IMR-90 (cell line): ENCODE measurements at regions of chr9 and their contacts with region 1.

Region 1: GRCh38 chr9:120842690-120843499 is at the start of gene PSMD5:
- DNase-seq: peak; percentile 100
- ATAC-seq: peak; percentile 99
- H3K4me3 ChIP-seq: peak within 1 kb of the TSS; percentile 91
- H3K27ac ChIP-seq: peak within 1 kb of the TSS; percentile 91
- H3K4me1 ChIP-seq: peaks cover 7% of the 10 kb centered on the region
- H3K27me3 ChIP-seq: no peaks in the 10 kb centered on the region
- CTCF ChIP-seq: 0 out of 2 replicates have a peak, but pooled peaks have one; percentile 3
- POLR2A ChIP-seq: peak; percentile 92
- RAD21 ChIP-seq: no peak
- total RNA-seq, gene PSMD5: 25.6 and 38.9 TPM in 2 replicates

Region 2: DNA sequence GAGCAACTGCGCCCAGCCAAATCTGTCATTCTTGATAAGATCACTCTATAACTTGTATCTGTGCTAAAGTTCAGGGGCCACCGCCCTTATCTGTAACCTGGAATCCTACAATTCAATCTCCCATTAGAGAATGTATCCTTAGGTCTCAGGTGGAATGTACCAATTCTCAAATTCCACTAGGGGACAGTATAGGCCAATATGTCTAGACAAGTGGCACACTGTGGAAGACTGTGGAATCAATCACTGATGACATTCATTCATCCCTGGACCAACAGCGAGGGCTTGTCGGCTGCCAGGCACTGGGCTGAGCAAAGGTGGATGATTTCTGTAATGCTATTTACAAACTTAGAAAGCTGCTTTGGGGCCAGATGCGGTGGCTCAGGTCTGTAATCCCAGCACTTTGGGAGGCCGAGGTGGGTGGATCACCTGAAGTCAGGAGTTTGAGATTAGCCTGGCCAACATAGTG is 99.9 kb before region 1 on chr9:
- CTCF ChIA-PET with region 1: no interaction called
- POLR2A ChIA-PET with region 1: no interaction called
- dilution Hi-C with region 1: no loop called
- in situ Hi-C with region 1: no loop called
- intact Hi-C with region 1: no loop called
- DNase-seq: peak; percentile 35
- ATAC-seq: peak; percentile 74
- H3K4me3 ChIP-seq: no peak overlapping the region
- H3K27ac ChIP-seq: no peak overlapping the region
- H3K4me1 ChIP-seq: no peaks in the 10 kb centered on the region
- H3K27me3 ChIP-seq: no peaks in the 10 kb centered on the region
- CTCF ChIP-seq: peak; percentile 60
- POLR2A ChIP-seq: no peak
- RAD21 ChIP-seq: peak; percentile 61

Region 3: DNA sequence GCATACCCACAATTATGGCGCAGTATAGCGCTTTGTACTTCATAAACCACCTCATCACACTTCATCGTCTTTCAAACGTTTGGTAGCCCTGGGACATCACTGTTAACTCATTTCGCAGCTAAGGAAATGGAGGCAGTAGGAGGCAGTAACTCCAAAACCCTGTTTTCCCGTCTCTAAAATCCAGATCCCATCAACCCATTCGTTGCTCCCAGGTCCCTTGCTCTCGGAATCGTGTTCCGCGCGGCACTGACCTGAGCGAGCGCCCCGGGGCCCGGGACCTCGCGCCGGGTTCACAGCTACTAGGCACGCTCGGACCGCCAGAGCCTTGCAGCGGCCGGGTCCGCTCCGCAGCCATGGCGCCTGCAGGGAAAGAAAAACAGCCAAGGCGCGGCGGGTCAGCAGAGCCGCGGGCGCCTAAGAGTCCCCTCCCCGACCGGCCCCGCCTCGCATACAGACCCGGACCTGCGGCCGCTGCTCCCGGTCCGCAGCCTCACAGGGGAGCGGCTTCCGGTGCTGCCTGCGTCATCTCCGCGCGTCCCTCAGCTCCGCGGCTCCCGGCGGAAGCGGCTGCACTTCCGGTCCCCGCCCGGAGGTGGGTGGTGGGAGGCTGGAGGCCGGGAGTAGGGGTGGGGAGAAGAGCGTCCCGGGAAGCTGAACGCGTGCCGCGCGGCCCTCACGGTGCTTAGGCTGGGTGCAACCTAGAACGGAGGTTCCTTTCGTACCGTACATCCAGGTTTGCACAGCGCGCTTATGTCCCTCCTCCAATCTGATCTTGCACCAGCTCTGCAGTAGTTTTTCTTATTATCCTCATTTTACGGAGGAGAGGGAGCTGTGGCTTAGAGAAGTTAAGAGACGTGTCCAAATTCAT is 49.8 kb before region 1 on chr9 and contains the start of gene FBXW2:
- CTCF ChIA-PET with region 1: no interaction called
- POLR2A ChIA-PET with region 1: no interaction called
- dilution Hi-C with region 1: no loop called
- in situ Hi-C with region 1: no loop called
- intact Hi-C with region 1: loop called (anchors 2 kb)
- DNase-seq: peak; percentile 89
- ATAC-seq: peak; percentile 97
- H3K4me3 ChIP-seq: peak within 1 kb of the TSS; percentile 79
- H3K27ac ChIP-seq: peak within 1 kb of the TSS; percentile 86
- H3K4me1 ChIP-seq: peaks cover 6% of the 10 kb centered on the region; the same call in 1 of the 2 replicates
- H3K27me3 ChIP-seq: no peaks in the 10 kb centered on the region
- CTCF ChIP-seq: no peak
- POLR2A ChIP-seq: peak; percentile 86; the same call in 1 of the 2 replicates
- RAD21 ChIP-seq: no peak
- total RNA-seq, gene FBXW2: 27.1 and 35.6 TPM in 2 replicates

Region 4: GRCh38 chr9:120868676-120869359 is 25.9 kb after region 1 on chr9:
- CTCF ChIA-PET with region 1: no interaction called
- POLR2A ChIA-PET with region 1: no interaction called
- dilution Hi-C with region 1: no loop called
- in situ Hi-C with region 1: no loop called
- intact Hi-C with region 1: loop called (anchors 2 kb)
- DNase-seq: peak; percentile 84
- ATAC-seq: peak; percentile 92
- H3K4me3 ChIP-seq: peak overlapping the region; percentile 53
- H3K27ac ChIP-seq: peak overlapping the region; percentile 85
- H3K4me1 ChIP-seq: peaks cover 10% of the 10 kb centered on the region
- H3K27me3 ChIP-seq: no peaks in the 10 kb centered on the region
- CTCF ChIP-seq: peak; percentile 45
- POLR2A ChIP-seq: peak; percentile 49; the same call in 1 of the 2 replicates
- RAD21 ChIP-seq: peak; percentile 50